ENCODE measurements at regions of chr7 and their contacts with region 1.

Region 1: GRCh38 chr7:76262683-76263402 is 39.6 kb upstream of the HSPB1 start:
- DNase-seq: peak; percentile 60
- H3K4me3 Mint-ChIP-seq: no peak overlapping the region
- H3K27ac Mint-ChIP-seq: no peak overlapping the region
- H3K4me1 Mint-ChIP-seq: peaks cover 4% of the 10 kb centered on the region
- H3K27me3 Mint-ChIP-seq: peaks cover 21% of the 10 kb centered on the region

Region 2: DNA sequence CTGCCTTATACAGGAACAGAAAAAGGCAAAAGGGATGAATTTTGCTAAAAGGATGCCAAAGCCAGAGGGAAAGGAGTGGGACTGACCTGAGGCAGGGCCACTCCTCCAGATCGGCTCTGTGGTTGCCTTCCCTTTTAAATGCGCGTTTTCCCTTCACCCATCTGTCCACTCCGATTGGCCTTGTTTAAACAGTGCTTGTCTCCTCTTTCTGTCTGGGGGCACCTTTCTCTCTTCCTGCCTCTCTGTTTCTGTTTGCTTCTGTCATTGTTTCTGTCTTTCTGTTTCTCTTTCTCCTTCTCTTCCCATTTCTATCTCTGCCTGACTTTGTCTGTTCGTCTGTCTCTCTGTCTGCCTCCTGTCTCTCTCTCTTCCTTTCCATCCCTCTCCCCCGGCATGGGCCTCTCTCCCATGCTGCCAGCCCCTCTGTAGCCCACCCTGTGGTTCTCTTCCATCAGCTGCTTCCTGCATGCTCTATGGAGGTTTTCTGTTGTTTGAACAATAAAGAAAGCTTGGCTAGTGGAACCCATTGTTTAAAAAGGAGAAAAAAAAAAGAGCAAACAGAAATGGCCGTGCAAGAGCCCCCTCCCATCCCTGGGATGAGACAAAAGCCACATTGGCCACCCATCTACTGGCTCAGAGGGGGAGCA is 10.1 kb after region 1 on chr7:
- CTCF ChIA-PET with region 1: interaction called, 10 read pairs
- intact Hi-C with region 1: no loop called
- DNase-seq: no peak
- H3K4me3 Mint-ChIP-seq: no peak overlapping the region
- H3K27ac Mint-ChIP-seq: no peak overlapping the region
- H3K4me1 Mint-ChIP-seq: peaks cover 16% of the 10 kb centered on the region
- H3K27me3 Mint-ChIP-seq: peaks cover 19% of the 10 kb centered on the region